Naive thymus-derived CD4-positive, alpha-beta T cell (primary cell): ENCODE measurements at regions of chr1 and their contacts with region 1.

Region 1: DNA sequence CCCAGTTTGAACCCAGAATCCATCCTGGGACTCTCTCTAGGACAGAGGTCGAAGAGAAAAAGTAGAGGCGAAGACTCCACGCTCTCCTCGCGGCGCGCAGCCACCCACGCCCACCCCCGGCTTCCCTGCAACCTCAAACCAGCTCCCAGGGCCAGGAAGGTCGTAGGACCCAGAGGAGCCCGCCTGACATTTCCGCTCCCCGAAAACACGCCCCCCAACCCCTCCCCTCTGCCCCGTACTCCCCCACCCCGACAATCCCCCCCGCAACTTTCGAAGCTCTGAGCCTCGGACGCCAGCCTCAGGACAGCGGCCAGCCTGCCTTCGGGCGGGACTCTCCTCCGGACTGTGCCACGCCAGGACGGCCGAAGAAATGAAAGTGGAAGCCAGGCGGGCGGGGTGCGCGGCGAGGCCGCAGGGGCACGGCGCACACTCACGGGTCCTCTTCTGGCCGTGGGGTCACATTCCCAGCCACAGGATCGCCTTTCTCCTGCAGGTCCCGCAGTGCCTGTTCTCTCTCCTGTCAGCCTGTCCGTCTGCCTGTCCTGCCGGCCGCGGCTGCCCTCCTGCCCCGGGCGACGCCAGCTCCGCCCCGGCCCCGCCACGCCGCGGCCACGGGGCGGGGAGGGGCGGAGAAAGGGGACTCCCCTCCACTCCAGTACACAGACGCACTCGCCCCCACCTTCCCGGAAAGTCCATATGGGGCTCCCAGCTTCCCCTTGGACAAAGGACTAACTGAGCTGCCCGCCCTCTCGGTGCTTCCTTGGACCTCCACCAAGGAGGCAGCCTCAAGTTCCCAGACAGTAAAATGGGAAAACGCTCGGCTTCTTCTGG is at the start of gene MOB3C:
- DNase-seq: peak; percentile 41 to 79 (median 62)
- ATAC-seq: peak; percentile 83
- H3K4me3 ChIP-seq: peak within 1 kb of the TSS; percentile 74
- H3K4me3 Mint-ChIP-seq: peak within 1 kb of the TSS; percentile 90 to 96 (median 93)
- H3K27ac ChIP-seq: peak within 1 kb of the TSS; percentile 94
- H3K27ac Mint-ChIP-seq: peak within 1 kb of the TSS; percentile 88 to 96 (median 93)
- H3K4me1 ChIP-seq: peaks cover 31 to 34% of the 10 kb centered on the region in 2 donors
- H3K4me1 Mint-ChIP-seq: peaks cover 14 to 68% (median 51%) of the 10 kb centered on the region in 7 donors
- H3K27me3 ChIP-seq: no peaks in the 10 kb centered on the region
- H3K27me3 Mint-ChIP-seq: no peaks in the 10 kb centered on the region
- total RNA-seq, gene MOB3C: 12.1 to 25.8 (median 25.2) TPM

Region 2: GRCh38 chr1:46247436-46248121 is 368.9 kb before region 1 on chr1 and contains the start of gene RAD54L:
- CTCF ChIA-PET with region 1: no interaction called
- POLR2A ChIA-PET with region 1: no interaction called
- intact Hi-C with region 1: no loop called
- DNase-seq: peak; percentile 83 to 97 (median 95)
- ATAC-seq: peak; percentile 99
- H3K4me3 ChIP-seq: peak within 1 kb of the TSS; percentile 89
- H3K4me3 Mint-ChIP-seq: peak within 1 kb of the TSS; percentile 86 to 100 (median 94)
- H3K27ac ChIP-seq: peak within 1 kb of the TSS; percentile 66
- H3K27ac Mint-ChIP-seq: peak within 1 kb of the TSS; percentile 62 to 96 (median 78)
- H3K4me1 ChIP-seq: peaks cover 4 to 8% of the 10 kb centered on the region in 2 donors
- H3K4me1 Mint-ChIP-seq: peaks cover 0 to 41% (median 17%) of the 10 kb centered on the region in 7 donors
- H3K27me3 ChIP-seq: no peaks in the 10 kb centered on the region
- H3K27me3 Mint-ChIP-seq: no peaks in the 10 kb centered on the region
- total RNA-seq, gene RAD54L: 0.94 to 31.9 (median 2.1) TPM

Region 3: GRCh38 chr1:46581681-46582455 is 34.6 kb before region 1 on chr1:
- CTCF ChIA-PET with region 1: no interaction called
- POLR2A ChIA-PET with region 1: no interaction called
- intact Hi-C with region 1: loop called in 1 of 2 experiments (anchors 5 kb)
- DNase-seq: peak in 1 of 9 donors; percentile 43
- ATAC-seq: peak; percentile 77
- H3K4me3 ChIP-seq: no peak overlapping the region
- H3K4me3 Mint-ChIP-seq: peak overlapping the region in 1 of 10 donors; percentile 83
- H3K27ac ChIP-seq: no peak overlapping the region
- H3K27ac Mint-ChIP-seq: peak overlapping the region in 4 of 9 donors; percentile 13 to 98 (median 59)
- H3K4me1 ChIP-seq: peaks cover 6 to 23% of the 10 kb centered on the region in 2 donors
- H3K4me1 Mint-ChIP-seq: peaks cover 5 to 55% (median 19%) of the 10 kb centered on the region in 7 donors
- H3K27me3 ChIP-seq: no peaks in the 10 kb centered on the region
- H3K27me3 Mint-ChIP-seq: no peaks in the 10 kb centered on the region

Region 4: GRCh38 chr1:46667782-46668760 is 51.6 kb after region 1 on chr1 and contains the start of gene ATPAF1:
- CTCF ChIA-PET with region 1: no interaction called
- POLR2A ChIA-PET with region 1: interaction called, 6 read pairs
- intact Hi-C with region 1: loop called (anchors 2 to 5 kb)
- DNase-seq: peak; percentile 41 to 76 (median 69)
- ATAC-seq: peak; percentile 92
- H3K4me3 ChIP-seq: peak within 1 kb of the TSS; percentile 62
- H3K4me3 Mint-ChIP-seq: peak within 1 kb of the TSS in 8 of 10 donors; percentile 77 to 89 (median 87)
- H3K27ac ChIP-seq: peak within 1 kb of the TSS; percentile 74
- H3K27ac Mint-ChIP-seq: peak within 1 kb of the TSS; percentile 16 to 89 (median 68)
- H3K4me1 ChIP-seq: peaks cover 12 to 21% of the 10 kb centered on the region in 2 donors
- H3K4me1 Mint-ChIP-seq: peaks cover 16 to 30% (median 25%) of the 10 kb centered on the region in 7 donors
- H3K27me3 ChIP-seq: no peaks in the 10 kb centered on the region
- H3K27me3 Mint-ChIP-seq: no peaks in the 10 kb centered on the region
- total RNA-seq, gene ATPAF1: 17.3 to 49.5 (median 28.6) TPM

Region 5: DNA sequence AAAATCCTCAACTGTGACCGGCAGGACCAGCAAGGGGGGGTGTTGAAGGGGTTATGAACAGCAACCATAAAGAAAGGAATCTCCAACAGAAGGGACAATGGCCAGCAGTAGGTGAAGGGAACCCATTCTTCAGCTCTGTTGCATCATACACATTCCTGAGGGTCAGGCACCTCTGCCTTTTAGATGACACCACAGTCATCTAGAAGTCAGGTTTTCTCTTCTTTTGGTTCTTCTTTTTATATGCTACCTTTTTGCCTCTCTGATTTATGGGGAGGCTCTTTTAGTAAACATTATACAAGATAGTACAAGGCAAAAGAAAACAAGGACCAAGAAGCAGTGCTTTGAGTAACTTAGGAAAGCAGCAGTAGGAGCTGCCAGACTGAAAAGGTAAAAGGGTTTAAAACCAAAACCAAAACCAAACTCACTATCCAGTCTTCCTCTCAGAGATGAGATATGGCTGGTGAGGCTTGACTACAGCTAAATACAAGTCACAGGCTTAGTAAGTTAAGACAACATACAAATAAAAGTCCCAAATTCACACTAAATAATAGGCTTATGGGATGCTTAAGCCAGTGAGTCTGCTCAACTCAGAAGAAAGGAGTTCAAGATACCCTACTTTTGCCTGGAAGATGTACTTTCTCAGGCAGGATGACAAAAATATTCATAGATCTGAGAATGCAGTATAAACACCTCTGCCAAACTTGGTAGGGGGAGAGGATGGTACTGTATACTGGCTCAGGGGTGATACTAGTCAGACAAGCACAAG is 59.2 kb after region 1 on chr1:
- CTCF ChIA-PET with region 1: no interaction called
- POLR2A ChIA-PET with region 1: interaction called, 4 read pairs
- intact Hi-C with region 1: loop called in 1 of 2 experiments (anchors 2 kb)
- DNase-seq: peak in 5 of 9 donors; percentile 11 to 36 (median 28)
- ATAC-seq: peak; percentile 76
- H3K4me3 ChIP-seq: peak overlapping the region; percentile 21
- H3K4me3 Mint-ChIP-seq: peak overlapping the region; percentile 42 to 79 (median 72)
- H3K27ac ChIP-seq: peak overlapping the region; percentile 71
- H3K27ac Mint-ChIP-seq: peak overlapping the region; percentile 90 to 98 (median 94)
- H3K4me1 ChIP-seq: peaks cover 14 to 18% of the 10 kb centered on the region in 2 donors
- H3K4me1 Mint-ChIP-seq: peaks cover 9 to 36% (median 28%) of the 10 kb centered on the region in 7 donors
- H3K27me3 ChIP-seq: no peaks in the 10 kb centered on the region
- H3K27me3 Mint-ChIP-seq: no peaks in the 10 kb centered on the region

Region 6: DNA sequence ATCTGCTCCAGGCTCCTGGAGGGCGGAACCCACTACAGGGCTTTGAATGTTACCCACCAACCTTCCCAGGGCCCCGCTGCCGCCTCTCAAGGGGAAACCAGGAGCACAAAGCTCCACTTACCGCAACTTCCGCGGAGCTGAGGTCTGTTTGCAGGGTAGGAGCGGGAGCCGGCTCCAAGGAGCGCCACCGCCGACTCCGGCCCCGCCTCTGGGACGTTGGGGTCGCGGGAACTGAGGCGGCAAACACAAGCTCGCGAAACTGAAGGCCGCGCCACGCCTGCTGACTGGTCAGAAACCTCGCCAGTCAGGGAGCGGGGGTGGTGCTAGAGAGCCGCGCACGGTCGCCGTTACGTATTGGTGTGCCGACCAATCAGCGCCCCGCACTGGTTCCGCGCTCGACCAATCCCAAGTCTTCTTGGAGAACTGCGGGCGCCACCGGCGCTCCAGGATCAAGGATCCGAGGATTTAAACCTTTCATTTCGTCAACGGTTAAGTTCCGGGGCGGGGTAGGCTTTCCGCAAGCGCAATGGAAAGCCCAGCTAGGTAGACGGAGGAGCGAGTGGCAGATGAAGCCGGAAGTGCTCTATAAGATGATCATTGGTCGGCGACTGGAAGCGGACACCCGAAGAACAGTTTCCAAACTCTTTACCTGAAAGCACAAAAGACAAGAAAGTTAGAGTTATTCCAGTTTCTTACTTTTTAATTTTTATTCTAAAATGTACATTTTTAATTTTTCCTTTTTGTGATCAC is 697.6 kb after region 1 on chr1 and contains the start of gene STIL:
- CTCF ChIA-PET with region 1: no interaction called
- POLR2A ChIA-PET with region 1: no interaction called
- intact Hi-C with region 1: loop called in 1 of 2 experiments (anchors 10 kb)
- DNase-seq: peak; percentile 87 to 96 (median 95)
- ATAC-seq: peak; percentile 98
- H3K4me3 ChIP-seq: peak within 1 kb of the TSS; percentile 73
- H3K4me3 Mint-ChIP-seq: peak within 1 kb of the TSS; percentile 84 to 98 (median 93)
- H3K27ac ChIP-seq: peak within 1 kb of the TSS; percentile 78
- H3K27ac Mint-ChIP-seq: peak within 1 kb of the TSS; percentile 88 to 98 (median 95)
- H3K4me1 ChIP-seq: no peaks in the 10 kb centered on the region
- H3K4me1 Mint-ChIP-seq: peaks cover 4 to 26% (median 13%) of the 10 kb centered on the region in 7 donors
- H3K27me3 ChIP-seq: no peaks in the 10 kb centered on the region
- H3K27me3 Mint-ChIP-seq: peaks cover 0 to 3% (median 0%) of the 10 kb centered on the region in 5 donors
- total RNA-seq, gene STIL: 1.3 to 28.5 (median 1.9) TPM